Gastrocnemius medialis (tissue), 4 donors: ENCODE measurements at regions of chr2 and their contacts with region 1.

Region 1: GRCh38 chr2:96856776-96857673 is 791 bp downstream of the ANKRD39 start:
- DNase-seq: peak in 1 of 2 donors; percentile 34
- ATAC-seq: peak; percentile 4 to 7
- H3K4me3 ChIP-seq: peak overlapping the region; percentile 69 to 90 (median 88)
- H3K27ac ChIP-seq: peak overlapping the region; percentile 86 to 93 (median 91)
- H3K4me1 ChIP-seq: peaks cover 12 to 19% of the 10 kb centered on the region in 2 donors
- H3K27me3 ChIP-seq: no peaks in the 10 kb centered on the region
- CTCF ChIP-seq: no peak
- POLR2A ChIP-seq: no peak

Region 2: DNA sequence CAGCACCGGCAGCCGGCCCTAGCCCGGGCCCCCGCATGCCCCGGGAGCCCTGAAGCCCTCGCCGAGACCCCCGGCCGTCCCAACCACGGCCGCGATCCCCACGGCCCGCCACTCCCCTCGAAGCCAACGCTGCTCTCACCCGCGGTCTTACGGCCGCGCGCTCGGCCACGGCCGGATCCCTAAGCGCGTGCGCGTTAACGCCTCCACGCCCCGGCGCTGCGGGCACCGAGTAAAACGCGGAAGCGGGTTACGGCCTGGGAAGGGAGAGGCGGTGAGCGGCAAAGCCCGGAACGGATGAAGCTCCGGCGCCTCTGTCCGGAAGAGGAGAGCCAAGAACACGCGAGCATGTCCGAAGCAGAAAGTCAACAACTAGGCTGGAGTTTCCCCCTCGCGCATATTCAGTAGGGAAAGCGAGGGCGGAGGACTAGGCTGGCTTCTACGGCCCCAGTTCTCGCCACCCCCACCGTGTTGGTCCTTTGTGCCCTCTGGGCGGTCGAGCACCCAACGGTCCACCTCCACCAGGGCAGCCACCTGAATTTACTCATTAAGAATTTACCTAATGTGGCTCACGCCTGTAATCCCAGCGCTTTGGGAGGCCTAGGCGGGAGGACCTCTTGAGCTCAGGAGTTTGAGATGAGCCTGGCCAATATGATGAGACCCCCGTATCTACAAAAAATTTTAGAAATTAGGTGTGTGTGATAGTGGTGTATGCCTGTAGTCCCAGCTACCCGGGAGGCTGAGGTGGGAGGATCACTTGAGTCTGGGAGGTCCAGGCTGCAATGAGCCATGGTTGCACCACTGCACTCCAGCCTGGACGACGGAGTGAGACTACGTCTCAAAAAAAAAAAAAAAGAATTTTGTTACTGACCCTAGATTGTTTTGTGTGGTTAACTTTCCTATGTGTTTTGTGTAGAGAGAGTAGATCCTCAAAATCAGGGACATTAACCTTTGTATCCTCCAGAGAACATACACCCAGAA is 218.6 kb before region 1 on chr2 and contains the start of gene KANSL3:
- in situ Hi-C with region 1: no loop called
- intact Hi-C with region 1: loop called (anchors 5 kb)
- DNase-seq: peak; percentile 87 to 89
- ATAC-seq: peak; percentile 80 to 89
- H3K4me3 ChIP-seq: peak within 1 kb of the TSS; percentile 57 to 85 (median 66)
- H3K27ac ChIP-seq: peak within 1 kb of the TSS; percentile 83 to 98 (median 90)
- H3K4me1 ChIP-seq: peaks cover 36 to 37% of the 10 kb centered on the region in 2 donors
- H3K27me3 ChIP-seq: no peaks in the 10 kb centered on the region
- CTCF ChIP-seq: peak in 2 of 5 experiments; percentile 46 to 51
- POLR2A ChIP-seq: peak; percentile 95
- total RNA-seq, gene KANSL3: 49.4 to 76.9 (median 60.4) TPM

Region 3: GRCh38 chr2:96816128-96816835 is 40.7 kb before region 1 on chr2 and contains the start of gene CNNM3:
- in situ Hi-C with region 1: no loop called
- intact Hi-C with region 1: loop called (anchors 1 kb)
- DNase-seq: peak; percentile 96
- ATAC-seq: peak; percentile 73 to 81
- H3K4me3 ChIP-seq: peak within 1 kb of the TSS; percentile 63 to 75 (median 67)
- H3K27ac ChIP-seq: peak within 1 kb of the TSS; percentile 92 to 96 (median 94)
- H3K4me1 ChIP-seq: peaks cover 52 to 59% of the 10 kb centered on the region in 2 donors
- H3K27me3 ChIP-seq: no peaks in the 10 kb centered on the region
- CTCF ChIP-seq: peak; percentile 60 to 82 (median 78)
- POLR2A ChIP-seq: peak; percentile 84 to 96
- total RNA-seq, gene CNNM3: 3.3 to 9.8 (median 8.6) TPM

Region 4: GRCh38 chr2:96907115-96908041 is 50.4 kb after region 1 on chr2:
- in situ Hi-C with region 1: no loop called
- intact Hi-C with region 1: loop called (anchors 1 kb)
- DNase-seq: peak; percentile 53 to 79
- ATAC-seq: peak; percentile 77 to 88
- H3K4me3 ChIP-seq: peak overlapping the region; percentile 18 to 32 (median 24)
- H3K27ac ChIP-seq: peak overlapping the region; percentile 69 to 80 (median 78)
- H3K4me1 ChIP-seq: peaks cover 24 to 26% of the 10 kb centered on the region in 2 donors
- H3K27me3 ChIP-seq: no peaks in the 10 kb centered on the region
- CTCF ChIP-seq: peak in 2 of 5 experiments; percentile 4 to 12
- POLR2A ChIP-seq: peak; percentile 26 to 38

Region 5: DNA sequence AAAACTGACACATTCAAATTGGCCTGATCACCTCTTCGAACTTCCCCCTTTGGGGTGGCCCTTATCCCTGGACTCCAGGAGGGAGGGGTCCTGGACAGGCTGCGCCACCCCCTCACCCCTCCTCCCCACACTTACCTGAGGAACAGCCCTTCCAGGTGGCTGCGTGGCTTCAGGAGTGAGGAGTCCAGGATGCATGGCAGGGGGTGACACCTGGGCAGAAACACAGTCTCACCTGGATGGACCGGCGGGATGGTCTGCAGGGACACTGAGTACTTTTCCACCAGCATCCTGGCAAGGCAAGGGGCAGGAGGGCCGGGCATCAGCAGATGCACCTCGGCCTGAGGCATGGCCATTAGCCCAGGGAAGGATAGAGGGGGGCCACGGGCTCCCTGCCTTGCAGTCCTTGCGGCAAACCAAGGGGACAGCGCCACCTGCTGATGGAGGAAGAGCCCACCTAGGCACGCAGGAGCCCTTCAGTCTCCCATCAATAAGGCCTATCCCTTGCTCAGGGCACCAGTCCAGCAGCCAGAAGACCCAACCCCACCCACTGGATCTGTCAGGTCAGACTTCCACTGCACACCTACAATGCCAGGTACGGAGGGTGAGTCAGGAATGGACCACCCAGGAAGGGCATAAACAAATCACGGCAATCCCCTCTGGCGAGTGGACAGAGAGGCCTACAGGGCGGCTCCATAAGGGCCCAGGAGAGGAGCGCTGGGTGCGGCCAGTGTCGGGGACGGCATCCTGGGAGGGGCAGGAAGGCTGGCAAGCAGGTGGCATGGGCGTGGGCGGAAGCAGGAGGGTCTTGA is 103.3 kb after region 1 on chr2:
- in situ Hi-C with region 1: no loop called
- intact Hi-C with region 1: loop called (anchors 1 kb)
- DNase-seq: peak; percentile 47 to 70
- ATAC-seq: peak; percentile 91 to 94
- H3K4me3 ChIP-seq: no peak overlapping the region
- H3K27ac ChIP-seq: no peak overlapping the region
- H3K4me1 ChIP-seq: no peaks in the 10 kb centered on the region
- H3K27me3 ChIP-seq: no peaks in the 10 kb centered on the region
- CTCF ChIP-seq: peak; percentile 74 to 91 (median 88)
- POLR2A ChIP-seq: no peak